ENCODE measurements at regions of chr17 and their contacts with region 1.

Region 1: GRCh38 chr17:51153210-51154072 is at the start of gene NME1:
- DNase-seq: peak; percentile 98
- H3K4me3 ChIP-seq: peak within 1 kb of the TSS; percentile 52 to 66 (median 57)
- H3K27ac ChIP-seq: peak within 1 kb of the TSS; percentile 88 to 94 (median 88)
- H3K4me1 ChIP-seq: peaks cover 0 to 22% (median 18%) of the 10 kb centered on the region in 4 donors
- H3K27me3 ChIP-seq: no peaks in the 10 kb centered on the region
- CTCF ChIP-seq: peak; percentile 65 to 70 (median 66)
- EP300 ChIP-seq: peak in 2 of 4 donors; percentile 16 to 33
- POLR2A ChIP-seq: no peak
- total RNA-seq, gene NME1: 12.5 to 37.7 (median 17.4) TPM

Region 2: DNA sequence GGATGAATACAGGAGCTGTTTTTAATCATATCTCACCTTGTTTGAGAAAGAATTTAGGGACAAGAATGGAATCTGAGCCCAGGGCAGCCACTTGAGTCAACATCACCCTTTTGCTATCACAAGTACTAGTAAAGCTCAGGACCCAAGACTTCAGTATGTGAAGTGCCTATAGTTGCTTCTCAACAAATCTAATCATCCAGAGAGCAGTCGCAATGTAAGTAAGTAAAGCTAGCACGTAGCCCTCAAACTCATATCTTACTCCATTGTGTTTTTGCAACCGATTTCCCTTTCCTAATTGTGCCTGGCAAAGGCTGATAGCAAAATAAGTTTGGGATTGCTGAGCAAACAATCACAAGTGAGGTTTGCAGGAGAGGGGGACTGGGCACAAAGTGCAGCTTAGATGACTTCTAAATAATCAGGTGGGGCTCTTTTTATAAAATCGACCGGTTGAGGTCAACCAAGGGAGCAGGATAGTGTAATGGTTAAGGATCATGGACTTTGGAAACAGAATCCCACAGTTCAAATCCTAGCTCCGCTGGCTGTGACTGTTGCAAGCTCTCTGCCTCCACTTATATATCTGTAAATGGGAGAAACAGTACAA is 300.3 kb before region 1 on chr17:
- intact Hi-C with region 1: loop called (anchors 5 kb)
- DNase-seq: no peak
- H3K4me3 ChIP-seq: no peak overlapping the region
- H3K27ac ChIP-seq: peak overlapping the region; percentile 58 to 71 (median 68)
- H3K4me1 ChIP-seq: peaks cover 0 to 20% (median 12%) of the 10 kb centered on the region in 4 donors
- H3K27me3 ChIP-seq: no peaks in the 10 kb centered on the region
- CTCF ChIP-seq: no peak
- EP300 ChIP-seq: no peak
- POLR2A ChIP-seq: no peak

Region 3: DNA sequence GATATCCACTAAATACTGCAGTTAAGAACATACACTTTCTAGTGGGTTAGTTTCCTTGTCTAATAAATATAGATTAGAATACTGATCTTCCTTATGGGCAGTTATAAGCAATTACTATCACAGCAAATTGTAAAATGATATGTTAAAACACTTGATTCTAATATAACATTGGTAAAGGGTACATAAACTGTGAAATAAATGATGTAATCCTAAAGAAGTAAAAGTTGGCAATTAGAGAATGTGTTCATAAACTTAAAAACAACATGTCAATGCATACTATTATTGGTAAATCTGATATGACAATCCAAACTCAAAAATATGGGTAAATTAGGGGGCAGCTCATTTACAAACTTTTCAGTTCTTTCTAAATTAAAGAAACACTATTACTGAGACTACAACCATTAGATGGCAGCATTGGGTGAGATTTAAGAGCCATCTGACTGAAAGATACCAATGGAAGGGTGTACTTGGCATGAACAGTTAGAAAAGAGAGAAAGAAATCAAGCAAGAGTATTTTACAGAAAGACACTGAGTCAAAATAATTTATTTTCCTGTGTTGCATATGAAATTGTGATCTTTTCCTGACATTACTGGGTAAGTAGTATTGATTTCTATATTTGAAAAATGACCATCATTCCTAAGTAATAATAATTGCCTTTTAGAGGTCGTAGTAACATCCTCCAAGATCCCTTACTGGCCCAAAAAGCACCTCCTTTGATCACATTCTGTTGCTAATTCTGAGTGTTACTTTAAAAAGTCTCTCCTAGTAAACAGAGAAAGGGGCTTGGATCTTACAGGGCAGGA is 152.4 kb before region 1 on chr17:
- intact Hi-C with region 1: loop called (anchors 1 kb)
- DNase-seq: no peak
- H3K4me3 ChIP-seq: no peak overlapping the region
- H3K27ac ChIP-seq: no peak overlapping the region
- H3K4me1 ChIP-seq: peaks cover 0 to 4% (median 0%) of the 10 kb centered on the region in 4 donors
- H3K27me3 ChIP-seq: no peaks in the 10 kb centered on the region
- CTCF ChIP-seq: peak; percentile 32 to 56 (median 47)
- EP300 ChIP-seq: no peak
- POLR2A ChIP-seq: no peak

Region 4: GRCh38 chr17:51056813-51057510 is 96.5 kb before region 1 on chr17:
- intact Hi-C with region 1: loop called (anchors 5 kb)
- DNase-seq: no peak
- H3K4me3 ChIP-seq: no peak overlapping the region
- H3K27ac ChIP-seq: peak overlapping the region; percentile 56 to 74 (median 64)
- H3K4me1 ChIP-seq: peaks cover 0 to 31% (median 22%) of the 10 kb centered on the region in 4 donors
- H3K27me3 ChIP-seq: no peaks in the 10 kb centered on the region
- CTCF ChIP-seq: peak; percentile 33 to 53 (median 36)
- EP300 ChIP-seq: no peak
- POLR2A ChIP-seq: no peak

Region 5: DNA sequence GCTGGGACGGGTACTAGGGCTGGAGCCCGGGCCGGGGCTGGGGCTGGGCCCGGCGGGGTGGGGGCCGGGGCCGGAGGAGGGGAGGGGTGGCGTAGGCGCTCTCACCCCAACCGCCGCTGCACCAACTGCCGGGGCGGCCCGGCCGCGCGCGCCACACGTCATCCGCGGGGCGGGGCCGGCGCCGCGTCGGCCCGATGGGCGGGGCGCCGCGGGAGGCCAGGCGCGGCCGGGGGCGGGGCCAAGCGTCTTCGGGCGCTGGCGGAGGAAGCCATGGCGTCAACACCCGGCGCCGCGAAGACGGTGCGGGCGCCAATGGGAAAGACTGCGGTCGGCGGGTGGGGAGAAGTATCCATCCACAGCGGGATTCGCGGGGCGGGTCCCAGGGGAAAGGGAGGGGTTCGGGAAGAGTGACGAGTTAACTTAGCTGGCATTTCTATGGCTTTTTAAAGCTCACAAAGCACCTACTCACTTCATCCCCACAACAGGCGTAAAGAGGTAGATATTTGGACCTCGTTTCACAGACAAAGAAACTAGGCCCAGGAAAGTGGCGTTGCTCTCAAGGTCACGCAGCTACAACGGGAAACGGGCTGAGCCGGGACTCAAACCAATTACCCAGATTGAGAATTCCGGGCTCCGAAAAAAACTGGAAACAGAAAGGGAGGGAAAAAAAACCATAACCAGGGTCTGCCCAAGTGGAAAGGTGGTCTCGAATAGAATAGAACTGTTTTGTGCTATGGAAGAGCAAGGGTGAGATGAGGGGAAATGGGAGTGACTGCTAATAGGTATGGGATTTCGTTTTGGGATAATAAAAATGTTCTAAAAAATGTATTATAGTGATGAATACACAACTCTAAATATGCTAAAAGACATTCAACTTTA is 32.5 kb before region 1 on chr17 and contains the start of gene SPAG9:
- intact Hi-C with region 1: loop called (anchors 1 kb)
- DNase-seq: peak; percentile 98
- H3K4me3 ChIP-seq: peak within 1 kb of the TSS; percentile 91 to 99 (median 98)
- H3K27ac ChIP-seq: peak within 1 kb of the TSS; percentile 98 to 100 (median 100)
- H3K4me1 ChIP-seq: peaks cover 0 to 43% (median 29%) of the 10 kb centered on the region in 4 donors
- H3K27me3 ChIP-seq: no peaks in the 10 kb centered on the region
- CTCF ChIP-seq: no peak
- EP300 ChIP-seq: peak in 2 of 4 donors; percentile 51 to 52
- POLR2A ChIP-seq: peak; percentile 83 to 85
- total RNA-seq, gene SPAG9: 74.3 to 79.9 (median 77.0) TPM

Measured in sigmoid colon (tissue), 7 donors.